PC-3 (cell line): ENCODE measurements at regions of chr1 and their contacts with region 1.

Region 1: DNA sequence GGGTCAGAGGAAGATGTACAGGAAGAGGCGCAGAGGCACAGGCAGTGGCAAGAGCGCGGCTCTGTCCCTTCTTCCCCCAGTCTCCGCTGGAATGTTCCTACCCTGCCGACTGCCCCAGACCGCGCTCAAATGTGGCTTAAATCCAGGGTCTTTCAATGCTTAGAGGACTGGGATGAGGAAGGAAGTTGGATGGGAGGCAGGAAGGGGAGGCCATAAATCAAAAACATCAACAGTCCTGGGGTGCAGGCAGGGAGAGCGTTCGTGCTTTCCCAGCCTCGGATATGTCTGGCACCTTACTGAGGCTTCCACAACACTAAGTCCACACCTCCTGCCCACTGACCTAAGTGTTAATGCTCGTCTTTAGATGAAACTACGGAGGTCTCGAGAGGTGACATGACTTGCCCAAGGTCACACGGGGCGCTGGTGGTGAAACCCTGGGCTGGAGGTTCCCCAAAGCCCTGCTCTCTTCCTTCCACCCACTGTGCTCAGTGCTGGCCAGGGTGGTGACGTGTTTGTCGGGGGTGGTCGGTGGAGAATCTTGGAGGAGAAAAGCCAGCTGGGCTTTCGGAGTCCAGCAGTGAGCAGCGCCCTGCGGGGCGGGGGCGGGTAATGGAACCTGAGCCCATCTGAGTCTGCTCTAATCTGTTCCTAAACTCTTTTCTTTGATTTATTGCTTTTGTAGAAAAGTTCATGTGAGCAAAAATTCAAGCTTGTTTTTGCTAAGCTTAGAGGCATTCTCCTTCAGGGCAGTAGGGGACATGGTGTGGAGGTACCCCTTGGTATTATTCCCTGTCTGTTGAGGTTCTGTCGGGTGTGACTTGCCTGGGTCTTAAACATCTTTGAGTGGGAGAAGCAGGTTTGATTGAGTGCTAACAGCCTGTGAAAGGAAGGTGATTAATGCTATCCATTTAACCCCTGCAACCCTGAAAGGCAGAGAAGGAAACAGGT is 708 bp downstream of the CDA start:
- DNase-seq: no peak
- ATAC-seq: peak; percentile 21
- H3K4me3 ChIP-seq: peak overlapping the region; percentile 78
- H3K27ac ChIP-seq: peak overlapping the region; percentile 80
- H3K4me1 ChIP-seq: peaks cover 27% of the 10 kb centered on the region
- H3K27me3 ChIP-seq: no peaks in the 10 kb centered on the region
- CTCF ChIP-seq: no peak

Region 2: GRCh38 chr1:19203440-19203839 is 1386.2 kb before region 1 on chr1:
- CTCF ChIA-PET with region 1: no interaction called
- POLR2A ChIA-PET with region 1: interaction called, 20 read pairs
- intact Hi-C with region 1: no loop called
- DNase-seq: peak; percentile 90
- ATAC-seq: peak; percentile 97
- H3K4me3 ChIP-seq: peak overlapping the region; percentile 17; the same call in 1 of the 2 replicates
- H3K27ac ChIP-seq: peak overlapping the region; percentile 80
- H3K4me1 ChIP-seq: peaks cover 33% of the 10 kb centered on the region
- H3K27me3 ChIP-seq: no peaks in the 10 kb centered on the region
- CTCF ChIP-seq: no peak

Region 3: DNA sequence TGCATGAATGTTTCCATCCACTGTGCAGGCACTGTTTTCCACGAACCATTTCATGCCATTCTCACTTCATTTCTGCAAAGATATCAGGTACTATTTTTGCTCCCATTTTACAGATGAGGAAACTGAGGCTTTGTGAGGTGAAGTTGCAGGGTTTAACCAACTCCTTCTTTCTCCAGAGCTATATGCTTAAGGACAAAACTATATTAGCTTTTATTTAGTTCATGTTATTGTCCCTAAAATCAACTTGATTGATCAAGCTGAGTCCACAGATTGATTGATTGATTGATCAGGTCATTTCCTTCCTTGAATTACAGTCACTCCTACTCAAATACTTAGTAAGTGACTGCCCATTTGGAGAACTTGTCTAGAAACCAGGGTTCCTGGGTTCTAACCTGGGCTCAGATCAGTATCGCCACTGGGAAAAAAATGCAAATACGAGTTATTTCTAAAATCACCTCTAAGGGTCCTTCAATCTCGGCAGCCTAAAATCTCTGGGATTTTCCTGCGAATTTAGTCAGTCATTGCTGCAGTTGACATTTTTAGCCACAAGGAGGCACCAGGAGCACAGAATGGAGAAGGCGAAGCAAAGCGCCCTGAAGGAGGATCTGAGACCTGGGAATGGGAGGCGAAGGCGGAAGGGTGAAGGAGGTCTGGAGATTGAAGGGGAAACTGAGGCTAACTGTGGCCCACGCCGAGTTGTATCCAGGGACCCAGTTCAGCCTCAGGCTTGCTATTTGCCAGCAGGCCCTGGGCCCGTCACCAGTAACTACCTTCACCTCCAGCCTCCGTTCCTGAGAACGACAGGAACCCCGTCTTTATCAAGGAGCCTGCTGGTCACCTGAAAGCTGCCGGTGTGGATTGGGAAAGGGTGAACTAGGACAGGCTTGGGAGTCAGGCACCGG is 67.4 kb before region 1 on chr1:
- CTCF ChIA-PET with region 1: no interaction called
- POLR2A ChIA-PET with region 1: no interaction called
- intact Hi-C with region 1: loop called (anchors 5 kb)
- DNase-seq: peak; percentile 96
- ATAC-seq: peak; percentile 70
- H3K4me3 ChIP-seq: no peak overlapping the region
- H3K27ac ChIP-seq: no peak overlapping the region
- H3K4me1 ChIP-seq: no peaks in the 10 kb centered on the region
- H3K27me3 ChIP-seq: no peaks in the 10 kb centered on the region
- CTCF ChIP-seq: peak; percentile 95

Region 4: GRCh38 chr1:20601129-20601825 is 11.7 kb after region 1 on chr1:
- CTCF ChIA-PET with region 1: no interaction called
- POLR2A ChIA-PET with region 1: no interaction called
- intact Hi-C with region 1: loop called (anchors 1 kb)
- DNase-seq: peak; percentile 84
- ATAC-seq: peak; percentile 71
- H3K4me3 ChIP-seq: no peak overlapping the region
- H3K27ac ChIP-seq: peak overlapping the region; percentile 97
- H3K4me1 ChIP-seq: peaks cover 56% of the 10 kb centered on the region
- H3K27me3 ChIP-seq: no peaks in the 10 kb centered on the region
- CTCF ChIP-seq: no peak

Region 5: DNA sequence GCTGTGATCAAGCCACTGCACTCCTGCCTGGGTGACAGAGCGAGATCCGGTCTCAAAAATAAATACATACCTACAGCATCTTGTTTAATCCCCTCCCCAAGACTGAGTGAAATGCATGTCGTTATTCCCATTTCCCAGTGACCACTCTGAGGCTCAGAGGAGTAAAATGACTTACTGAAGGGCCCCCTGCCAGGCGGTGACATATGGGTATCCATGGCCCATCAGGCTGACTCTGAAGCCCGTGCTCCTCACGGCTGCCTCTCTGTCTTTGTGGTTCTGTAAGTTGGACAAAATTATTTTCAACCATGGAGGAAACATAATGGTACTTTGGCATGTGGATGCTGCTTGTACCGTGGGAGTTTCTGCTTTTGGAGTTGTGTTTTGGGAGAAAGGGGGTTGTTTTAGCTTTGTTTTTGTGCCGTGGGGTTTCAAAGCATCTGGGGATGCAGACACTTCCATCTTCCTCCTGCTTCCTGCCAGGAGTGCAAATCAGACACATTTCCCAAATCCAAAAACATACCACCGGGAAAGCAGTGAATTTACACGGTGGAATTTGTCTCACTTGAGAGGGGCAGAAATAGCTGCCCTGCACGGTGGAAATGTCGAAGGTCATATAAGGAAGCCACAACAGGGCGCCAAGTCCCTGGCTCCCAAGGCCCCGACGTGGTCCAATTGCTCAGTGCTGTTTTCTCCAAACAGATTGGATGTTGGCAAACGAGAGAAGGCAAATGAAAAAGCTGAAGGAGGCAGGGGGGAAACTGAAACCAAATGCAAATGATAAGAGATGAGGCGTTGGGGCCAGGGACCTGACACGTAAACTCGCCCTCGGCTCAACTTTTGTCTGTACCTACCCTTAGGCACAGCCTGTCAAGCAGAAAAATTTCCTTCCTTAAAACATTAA is 26.6 kb after region 1 on chr1:
- CTCF ChIA-PET with region 1: interaction called, 4 read pairs
- POLR2A ChIA-PET with region 1: interaction called, 15 read pairs
- intact Hi-C with region 1: no loop called
- DNase-seq: no peak
- ATAC-seq: no peak
- H3K4me3 ChIP-seq: no peak overlapping the region
- H3K27ac ChIP-seq: no peak overlapping the region
- H3K4me1 ChIP-seq: peaks cover 33% of the 10 kb centered on the region
- H3K27me3 ChIP-seq: no peaks in the 10 kb centered on the region
- CTCF ChIP-seq: no peak

Region 6: GRCh38 chr1:20633190-20634064 is 43.8 kb after region 1 on chr1 and contains the start of gene PINK1:
- CTCF ChIA-PET with region 1: interaction called, 6 read pairs
- POLR2A ChIA-PET with region 1: interaction called, 19 read pairs
- intact Hi-C with region 1: no loop called
- DNase-seq: peak; percentile 81
- ATAC-seq: peak; percentile 89
- H3K4me3 ChIP-seq: peak within 1 kb of the TSS; percentile 74
- H3K27ac ChIP-seq: peak within 1 kb of the TSS; percentile 62
- H3K4me1 ChIP-seq: peaks cover 18% of the 10 kb centered on the region
- H3K27me3 ChIP-seq: no peaks in the 10 kb centered on the region
- CTCF ChIP-seq: peak; percentile 94
- total RNA-seq, gene PINK1: 129 and 160 TPM in 2 replicates

Region 7: DNA sequence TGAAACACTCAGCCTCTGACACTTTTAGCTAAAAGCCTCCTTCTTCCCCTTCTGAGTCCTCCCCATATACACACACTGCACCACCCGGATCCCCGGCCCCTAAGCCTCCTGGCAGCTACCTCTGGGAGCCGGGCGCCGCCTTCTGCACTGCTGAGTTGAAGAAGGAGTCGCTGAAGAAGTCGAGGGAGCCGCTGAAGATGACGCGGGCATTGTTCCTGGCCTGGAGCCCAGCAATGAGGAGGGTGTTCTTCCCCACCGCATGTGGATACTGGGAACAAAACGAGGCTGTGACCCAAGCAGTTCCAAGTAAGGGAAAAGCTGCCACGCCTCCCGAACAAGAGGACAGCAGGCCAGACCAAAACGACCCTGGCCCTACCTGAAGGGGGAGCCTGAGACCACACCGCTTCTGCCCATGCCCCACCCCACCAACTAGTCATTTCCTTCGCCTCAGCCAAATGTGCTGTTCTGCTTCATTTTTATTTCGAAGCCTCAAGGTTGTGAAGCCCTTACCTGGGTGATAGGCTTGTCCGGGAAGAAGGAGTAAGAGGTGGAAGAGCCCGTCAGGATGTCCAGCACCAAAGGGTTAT is 64.6 kb after region 1 on chr1:
- CTCF ChIA-PET with region 1: no interaction called
- POLR2A ChIA-PET with region 1: no interaction called
- intact Hi-C with region 1: no loop called
- DNase-seq: no peak
- ATAC-seq: no peak; the same call in 1 of the 2 replicates
- H3K4me3 ChIP-seq: no peak overlapping the region
- H3K27ac ChIP-seq: no peak overlapping the region
- H3K4me1 ChIP-seq: no peaks in the 10 kb centered on the region
- H3K27me3 ChIP-seq: no peaks in the 10 kb centered on the region
- CTCF ChIP-seq: no peak